Thyroid gland (tissue), 4 donors: ENCODE measurements at regions of chr10 and their contacts with region 1.

Region 1: GRCh38 chr10:78899996-78900714 is 168.6 kb upstream of the ZMIZ1 start:
- DNase-seq: no peak
- H3K4me3 ChIP-seq: no peak overlapping the region
- H3K27ac ChIP-seq: no peak overlapping the region
- H3K4me1 ChIP-seq: peaks cover 0 to 8% of the 10 kb centered on the region in 2 donors
- H3K27me3 ChIP-seq: no peaks in the 10 kb centered on the region
- CTCF ChIP-seq: no peak
- POLR2A ChIP-seq: no peak

Region 2: GRCh38 chr10:78552261-78552811 is 347.8 kb before region 1 on chr10:
- intact Hi-C with region 1: no loop called
- DNase-seq: peak; percentile 69 to 70
- H3K4me3 ChIP-seq: no peak overlapping the region
- H3K27ac ChIP-seq: peak overlapping the region; percentile 46 to 70 (median 52)
- H3K4me1 ChIP-seq: peaks cover 37 to 49% of the 10 kb centered on the region in 2 donors
- H3K27me3 ChIP-seq: no peaks in the 10 kb centered on the region
- CTCF ChIP-seq: no peak
- POLR2A ChIP-seq: no peak

Region 3: GRCh38 chr10:78634389-78634815 is 265.8 kb before region 1 on chr10:
- intact Hi-C with region 1: loop called (anchors 10 kb)
- DNase-seq: peak; percentile 15 to 19
- H3K4me3 ChIP-seq: no peak overlapping the region
- H3K27ac ChIP-seq: peak overlapping the region in 2 of 3 donors; percentile 4 to 45
- H3K4me1 ChIP-seq: peaks cover 9 to 12% of the 10 kb centered on the region in 2 donors
- H3K27me3 ChIP-seq: no peaks in the 10 kb centered on the region
- CTCF ChIP-seq: no peak
- POLR2A ChIP-seq: no peak